ENCODE measurements at regions of chr12 and their contacts with region 1.

Region 1: DNA sequence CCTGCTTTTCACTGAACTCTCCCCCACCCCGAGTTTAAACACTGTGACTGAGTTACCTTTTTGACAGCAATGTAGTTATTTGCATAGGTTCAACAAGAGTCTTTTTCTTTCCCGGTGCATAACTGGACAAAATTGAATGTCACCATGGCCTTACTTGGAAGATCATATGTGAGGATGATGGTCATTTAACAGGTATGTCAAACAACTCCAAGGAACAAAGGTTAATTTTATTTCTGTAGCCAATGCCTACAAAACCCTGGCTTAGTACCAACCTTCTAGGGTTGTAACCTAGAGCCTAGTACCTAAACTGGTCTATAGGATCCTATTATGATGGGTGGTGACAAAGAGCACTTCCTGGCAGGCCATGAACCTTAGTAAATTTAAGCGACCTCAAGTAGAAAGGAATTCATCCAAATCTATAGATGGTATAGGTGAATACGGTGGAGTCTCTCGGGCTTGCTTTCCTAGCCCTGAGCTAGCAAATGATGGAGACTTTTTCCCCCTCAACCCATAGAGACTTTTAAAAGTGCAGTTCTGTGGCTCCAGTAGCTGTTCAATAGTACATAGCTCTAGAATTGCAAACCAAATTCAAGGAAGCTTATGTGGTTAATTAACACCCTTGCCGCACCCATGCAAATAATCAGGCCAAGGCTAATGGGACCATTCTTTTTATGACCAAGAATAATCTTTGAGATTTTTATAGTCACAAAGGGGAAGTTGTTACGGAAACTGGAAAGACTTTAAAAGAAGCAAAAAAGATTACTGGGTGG is 89.0 kb downstream of the SLC38A1 start:
- DNase-seq: peak; percentile 57
- ATAC-seq: peak; percentile 53
- H3K4me3 ChIP-seq: peak overlapping the region in 2 of 5 experiments; percentile 15 to 35
- H3K4me3 Mint-ChIP-seq: peak overlapping the region; percentile 44
- H3K27ac ChIP-seq: peak overlapping the region; percentile 43 to 75
- H3K27ac Mint-ChIP-seq: peak overlapping the region; percentile 4
- H3K4me1 ChIP-seq: peaks cover 73 to 78% of the 10 kb centered on the region in 2 donors
- H3K4me1 Mint-ChIP-seq: peaks cover 85% of the 10 kb centered on the region
- H3K27me3 ChIP-seq: no peaks in the 10 kb centered on the region
- H3K27me3 Mint-ChIP-seq: no peaks in the 10 kb centered on the region
- CTCF ChIP-seq: no peak

Region 2: DNA sequence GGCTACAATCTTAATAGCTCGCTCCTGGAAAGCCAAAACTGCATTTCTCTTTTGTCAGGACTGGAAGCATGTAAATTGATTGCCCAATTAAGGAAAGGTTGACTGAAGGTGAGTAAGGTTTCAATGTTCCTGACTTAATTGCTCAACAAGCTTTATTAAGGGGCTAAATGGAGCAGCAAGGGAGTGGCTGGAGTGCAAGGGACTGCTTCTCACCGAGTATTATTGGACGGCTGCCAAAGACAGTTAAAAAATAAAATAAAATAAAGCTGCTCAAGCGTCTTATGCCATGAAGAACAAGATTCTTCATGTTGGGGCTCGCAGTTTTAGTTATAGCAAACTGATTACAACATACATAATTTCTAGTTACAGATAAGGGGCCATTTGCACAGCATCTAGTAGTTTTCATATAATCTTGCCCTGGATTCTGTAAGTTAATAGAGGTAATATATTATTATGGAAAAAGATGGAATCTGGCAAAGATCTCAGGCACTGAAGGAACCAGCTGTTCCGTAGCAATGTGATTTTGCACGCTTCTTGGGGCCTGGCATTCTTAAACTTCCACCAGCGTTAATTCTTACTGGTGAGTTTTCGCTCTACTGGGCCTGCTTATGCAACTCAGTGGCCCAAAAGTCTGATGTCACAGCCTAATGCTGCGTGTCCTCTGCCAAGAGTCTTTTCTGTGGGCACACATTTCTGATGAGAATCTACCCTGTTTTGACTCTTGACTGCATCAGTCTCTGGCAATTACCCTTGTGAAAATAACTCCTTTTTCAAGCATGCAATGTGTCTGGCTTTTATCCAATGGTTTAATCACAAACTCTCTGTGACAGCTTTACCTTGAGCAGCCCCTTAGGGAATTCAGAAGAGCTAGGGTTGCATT is 19.5 kb before region 1 on chr12:
- CTCF ChIA-PET with region 1: interaction called, 4 read pairs
- POLR2A ChIA-PET with region 1: no interaction called
- intact Hi-C with region 1: loop called (anchors 2 kb)
- DNase-seq: no peak
- ATAC-seq: no peak
- H3K4me3 ChIP-seq: no peak overlapping the region
- H3K4me3 Mint-ChIP-seq: peak overlapping the region; percentile 10
- H3K27ac ChIP-seq: no peak overlapping the region
- H3K27ac Mint-ChIP-seq: no peak overlapping the region
- H3K4me1 ChIP-seq: peaks cover 11 to 17% of the 10 kb centered on the region in 2 donors
- H3K4me1 Mint-ChIP-seq: peaks cover 32% of the 10 kb centered on the region
- H3K27me3 ChIP-seq: no peaks in the 10 kb centered on the region
- H3K27me3 Mint-ChIP-seq: no peaks in the 10 kb centered on the region
- CTCF ChIP-seq: no peak

Region 3: GRCh38 chr12:46217541-46218321 is 37.9 kb after region 1 on chr12:
- CTCF ChIA-PET with region 1: no interaction called
- POLR2A ChIA-PET with region 1: no interaction called
- intact Hi-C with region 1: loop called (anchors 5 kb)
- DNase-seq: peak; percentile 87
- ATAC-seq: peak; percentile 70
- H3K4me3 ChIP-seq: peak overlapping the region in 4 of 5 experiments; percentile 16 to 59 (median 32)
- H3K4me3 Mint-ChIP-seq: peak overlapping the region; percentile 69
- H3K27ac ChIP-seq: peak overlapping the region; percentile 83 to 96
- H3K27ac Mint-ChIP-seq: peak overlapping the region; percentile 86
- H3K4me1 ChIP-seq: peaks cover 94 to 97% of the 10 kb centered on the region in 2 donors
- H3K4me1 Mint-ChIP-seq: peaks cover 94% of the 10 kb centered on the region
- H3K27me3 ChIP-seq: no peaks in the 10 kb centered on the region
- H3K27me3 Mint-ChIP-seq: no peaks in the 10 kb centered on the region
- CTCF ChIP-seq: no peak

Region 4: GRCh38 chr12:47679785-47680184 is 1499.9 kb after region 1 on chr12:
- CTCF ChIA-PET with region 1: no interaction called
- POLR2A ChIA-PET with region 1: no interaction called
- intact Hi-C with region 1: no loop called
- DNase-seq: no peak
- ATAC-seq: no peak
- H3K4me3 ChIP-seq: no peak overlapping the region
- H3K4me3 Mint-ChIP-seq: no peak overlapping the region
- H3K27ac ChIP-seq: no peak overlapping the region
- H3K27ac Mint-ChIP-seq: no peak overlapping the region
- H3K4me1 ChIP-seq: no peaks in the 10 kb centered on the region
- H3K4me1 Mint-ChIP-seq: peaks cover 18% of the 10 kb centered on the region
- H3K27me3 ChIP-seq: no peaks in the 10 kb centered on the region
- H3K27me3 Mint-ChIP-seq: no peaks in the 10 kb centered on the region
- CTCF ChIP-seq: no peak

Measured in B cell (primary cell).